ENCODE measurements at regions of chr22 and their contacts with region 1.

Region 1: GRCh38 chr22:22687638-22688500 is 43.5 kb downstream of the GGTLC2 start:
- DNase-seq: peak; percentile 36
- ATAC-seq: no peak
- H3K4me3 ChIP-seq: no peak overlapping the region
- H3K4me3 Mint-ChIP-seq: peak overlapping the region; percentile 78
- H3K27ac ChIP-seq: peak overlapping the region; percentile 11 to 52
- H3K27ac Mint-ChIP-seq: peak overlapping the region; percentile 81
- H3K4me1 ChIP-seq: peaks cover 46 to 56% of the 10 kb centered on the region in 2 donors
- H3K4me1 Mint-ChIP-seq: peaks cover 54% of the 10 kb centered on the region
- H3K27me3 ChIP-seq: no peaks in the 10 kb centered on the region
- H3K27me3 Mint-ChIP-seq: no peaks in the 10 kb centered on the region
- CTCF ChIP-seq: peak; percentile 47

Region 2: DNA sequence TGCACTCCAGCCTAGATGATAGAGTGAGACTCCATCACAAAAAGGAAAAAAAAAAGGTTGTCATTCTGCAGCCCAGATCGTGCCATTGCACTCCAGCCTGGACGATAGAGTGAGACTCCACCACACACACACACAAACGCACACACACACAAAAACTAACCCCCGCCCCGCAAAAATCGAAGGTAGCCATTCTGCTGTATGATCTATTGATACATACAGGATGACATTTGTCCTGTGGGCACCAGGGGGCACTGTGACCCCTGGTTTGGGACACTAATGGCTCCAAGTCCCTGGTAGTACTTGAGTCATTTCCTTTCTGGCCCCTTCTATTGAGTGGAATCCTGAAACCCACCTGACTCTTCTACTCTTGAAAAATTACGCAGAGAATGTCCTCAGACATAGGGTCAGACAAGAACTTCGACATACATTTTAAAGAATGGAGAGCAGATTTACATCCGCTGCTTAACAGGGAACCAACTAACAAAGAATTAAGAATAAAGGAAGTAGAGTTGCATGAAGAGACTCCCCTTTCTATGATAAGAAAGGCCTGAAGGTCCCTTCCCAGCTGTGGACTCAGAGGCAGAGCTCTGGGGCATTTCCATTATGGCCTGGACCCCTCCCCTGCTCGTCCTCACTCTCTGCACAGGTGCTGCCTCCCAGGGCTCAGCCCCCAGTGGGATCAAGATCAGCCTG is 93.8 kb before region 1 on chr22:
- CTCF ChIA-PET with region 1: interaction called, 10 read pairs
- POLR2A ChIA-PET with region 1: no interaction called
- intact Hi-C with region 1: no loop called
- DNase-seq: peak; percentile 80
- ATAC-seq: peak; percentile 74
- H3K4me3 ChIP-seq: no peak overlapping the region
- H3K4me3 Mint-ChIP-seq: no peak overlapping the region
- H3K27ac ChIP-seq: no peak overlapping the region
- H3K27ac Mint-ChIP-seq: peak overlapping the region; percentile 82
- H3K4me1 ChIP-seq: peaks cover 10 to 11% of the 10 kb centered on the region in 2 donors
- H3K4me1 Mint-ChIP-seq: peaks cover 26% of the 10 kb centered on the region
- H3K27me3 ChIP-seq: no peaks in the 10 kb centered on the region
- H3K27me3 Mint-ChIP-seq: no peaks in the 10 kb centered on the region
- CTCF ChIP-seq: peak; percentile 81

Region 3: DNA sequence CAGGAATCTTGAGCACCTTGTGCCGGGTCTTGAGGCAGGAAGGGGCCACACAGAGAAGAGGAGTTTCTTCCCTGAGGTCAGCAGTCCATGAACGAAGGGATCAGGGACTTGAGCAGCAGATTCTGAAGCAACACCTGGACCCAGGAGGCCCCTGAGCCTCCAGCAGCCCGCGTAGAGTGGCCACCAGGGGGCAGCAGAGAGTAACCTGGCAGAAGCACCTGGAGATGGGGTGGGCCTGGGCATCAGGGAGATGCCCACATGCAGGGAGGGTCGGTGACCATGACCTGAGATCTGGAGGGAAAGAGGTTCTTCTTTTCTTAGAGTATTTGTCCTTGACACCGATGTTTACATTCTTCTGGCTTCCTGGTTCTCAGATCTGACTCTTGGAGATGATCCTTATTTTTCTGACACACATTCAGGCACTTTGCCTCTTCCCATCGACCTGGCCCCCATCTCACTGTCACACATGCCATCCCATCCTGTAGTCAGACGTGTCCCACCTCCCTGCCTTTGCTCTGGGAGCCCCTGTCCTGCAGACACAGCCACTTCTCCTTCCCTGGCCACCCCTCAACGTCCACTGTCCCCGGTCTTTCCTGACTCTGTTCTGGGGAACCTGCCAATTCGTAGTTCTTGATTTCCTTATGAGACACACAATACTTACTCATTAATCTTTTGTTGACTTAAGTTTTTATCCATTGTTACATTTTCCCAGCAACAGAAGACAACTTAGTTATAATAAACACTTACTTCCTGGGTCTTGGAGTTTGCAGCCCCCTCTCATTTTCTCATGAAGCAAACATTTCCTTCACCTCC is 23.1 kb after region 1 on chr22:
- CTCF ChIA-PET with region 1: interaction called, 140 read pairs
- POLR2A ChIA-PET with region 1: no interaction called
- intact Hi-C with region 1: no loop called
- DNase-seq: peak; percentile 80
- ATAC-seq: peak; percentile 48
- H3K4me3 ChIP-seq: no peak overlapping the region
- H3K4me3 Mint-ChIP-seq: peak overlapping the region; percentile 23
- H3K27ac ChIP-seq: no peak overlapping the region
- H3K27ac Mint-ChIP-seq: peak overlapping the region; percentile 76
- H3K4me1 ChIP-seq: peaks cover 30 to 53% of the 10 kb centered on the region in 2 donors
- H3K4me1 Mint-ChIP-seq: peaks cover 52% of the 10 kb centered on the region
- H3K27me3 ChIP-seq: peaks cover 0 to 2% (median 0%) of the 10 kb centered on the region in 4 experiments
- H3K27me3 Mint-ChIP-seq: peaks cover 3% of the 10 kb centered on the region
- CTCF ChIP-seq: peak; percentile 89

Region 4: DNA sequence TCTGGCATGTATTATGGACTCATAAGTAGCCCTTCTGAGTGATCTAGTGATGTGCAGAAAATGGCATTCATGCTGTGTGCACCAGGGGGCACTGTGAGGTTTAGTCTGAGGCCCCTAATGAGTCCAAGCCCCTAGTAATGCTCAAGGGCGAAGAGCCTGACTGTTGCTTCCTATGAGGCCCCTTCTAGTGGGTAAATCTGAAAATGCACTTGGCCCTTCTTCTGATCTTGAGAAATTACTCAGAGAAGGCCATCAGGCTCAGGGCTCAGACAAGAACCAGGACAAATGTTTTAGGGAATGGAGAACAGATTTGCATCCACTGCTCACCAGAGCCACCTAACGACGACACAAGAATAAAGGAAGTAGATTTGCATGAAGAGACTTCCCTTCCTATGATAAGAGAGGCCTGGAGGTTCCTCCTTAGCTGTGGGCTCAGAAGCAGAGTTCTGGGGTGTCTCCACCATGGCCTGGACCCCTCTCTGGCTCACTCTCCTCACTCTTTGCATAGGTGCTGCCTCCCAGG is 32.4 kb after region 1 on chr22:
- CTCF ChIA-PET with region 1: interaction called, 18 read pairs
- POLR2A ChIA-PET with region 1: no interaction called
- intact Hi-C with region 1: loop called (anchors 2 kb)
- DNase-seq: peak; percentile 86
- ATAC-seq: peak; percentile 79
- H3K4me3 ChIP-seq: peak overlapping the region in 4 of 5 experiments; percentile 32 to 47 (median 38)
- H3K4me3 Mint-ChIP-seq: peak overlapping the region; percentile 60
- H3K27ac ChIP-seq: peak overlapping the region; percentile 92 to 96
- H3K27ac Mint-ChIP-seq: peak overlapping the region; percentile 95
- H3K4me1 ChIP-seq: peaks cover 43% of the 10 kb centered on the region in 2 donors
- H3K4me1 Mint-ChIP-seq: peaks cover 52% of the 10 kb centered on the region
- H3K27me3 ChIP-seq: no peaks in the 10 kb centered on the region
- H3K27me3 Mint-ChIP-seq: no peaks in the 10 kb centered on the region
- CTCF ChIP-seq: peak; percentile 78

Measured in B cell (primary cell).